ENCODE measurements at regions of chr4 and their contacts with region 1.

Region 1: GRCh38 chr4:47926639-47927258 is 12.4 kb upstream of the NFXL1 start:
- DNase-seq: peak in 1 of 2 experiments; percentile 70
- H3K4me3 ChIP-seq: peak overlapping the region in 3 of 4 experiments; percentile 33 to 45 (median 42); a peak in 6 of 8 replicates
- H3K27ac ChIP-seq: no peak overlapping the region
- H3K4me1 ChIP-seq: peaks cover 0 to 7% (median 3%) of the 10 kb centered on the region in 4 experiments; a peak in 3 of 7 replicates
- H3K27me3 ChIP-seq: no peaks in the 10 kb centered on the region
- CTCF ChIP-seq: peak; percentile 75 to 91 (median 75)
- EP300 ChIP-seq: no peak
- POLR2A ChIP-seq: no peak
- RAD21 ChIP-seq: peak; percentile 66 to 74

Region 2: GRCh38 chr4:47914220-47914925 is 12.4 kb before region 1 on chr4 and contains the start of gene NFXL1:
- CTCF ChIA-PET with region 1: interaction called, 12 read pairs
- POLR2A ChIA-PET with region 1: interaction called, 12 read pairs
- DNase-seq: peak; percentile 85 to 92
- H3K4me3 ChIP-seq: peak within 1 kb of the TSS; percentile 88 to 98 (median 96)
- H3K27ac ChIP-seq: peak within 1 kb of the TSS; percentile 75
- H3K4me1 ChIP-seq: peaks cover 0 to 2% (median 0%) of the 10 kb centered on the region in 4 experiments; a peak in 1 of 7 replicates
- H3K27me3 ChIP-seq: no peaks in the 10 kb centered on the region
- CTCF ChIP-seq: no peak
- EP300 ChIP-seq: no peak
- POLR2A ChIP-seq: peak; percentile 74 to 86
- RAD21 ChIP-seq: no peak
- total RNA-seq, gene NFXL1: 27.7 and 29.5 TPM in 2 replicates

Region 3: GRCh38 chr4:48269861-48270522 is 343.2 kb after region 1 on chr4:
- CTCF ChIA-PET with region 1: no interaction called
- POLR2A ChIA-PET with region 1: no interaction called
- DNase-seq: peak; percentile 85 to 96
- H3K4me3 ChIP-seq: peak overlapping the region; percentile 58 to 74 (median 69)
- H3K27ac ChIP-seq: no peak overlapping the region; the same call in 1 of the 2 replicates
- H3K4me1 ChIP-seq: peaks cover 0 to 4% (median 0%) of the 10 kb centered on the region in 4 experiments; a peak in 3 of 7 replicates
- H3K27me3 ChIP-seq: no peaks in the 10 kb centered on the region
- CTCF ChIP-seq: peak; percentile 26 to 35 (median 33)
- EP300 ChIP-seq: no peak
- POLR2A ChIP-seq: no peak
- RAD21 ChIP-seq: no peak; a peak in 1 of 4 replicates

Measured in H1 (cell line).